ENCODE measurements at regions of chr2 and their contacts with region 1.

Region 1: GRCh38 chr2:232611551-232612218 is 21.7 kb upstream of the EFHD1 start:
- H3K4me3 ChIP-seq: no peak overlapping the region
- H3K27ac ChIP-seq: peak overlapping the region; percentile 19; the same call in 1 of the 2 replicates
- H3K4me1 ChIP-seq: no peaks in the 10 kb centered on the region
- CTCF ChIP-seq: peak; percentile 89

Region 2: GRCh38 chr2:232576995-232577394 is 34.7 kb before region 1 on chr2:
- CTCF ChIA-PET with region 1: no interaction called
- POLR2A ChIA-PET with region 1: no interaction called
- H3K4me3 ChIP-seq: no peak overlapping the region
- H3K27ac ChIP-seq: no peak overlapping the region
- H3K4me1 ChIP-seq: no peaks in the 10 kb centered on the region
- CTCF ChIP-seq: no peak

Region 3: GRCh38 chr2:232592772-232593395 is 18.8 kb before region 1 on chr2:
- CTCF ChIA-PET with region 1: no interaction called
- POLR2A ChIA-PET with region 1: no interaction called
- H3K4me3 ChIP-seq: no peak overlapping the region
- H3K27ac ChIP-seq: no peak overlapping the region
- H3K4me1 ChIP-seq: no peaks in the 10 kb centered on the region
- CTCF ChIP-seq: no peak

Region 4: DNA sequence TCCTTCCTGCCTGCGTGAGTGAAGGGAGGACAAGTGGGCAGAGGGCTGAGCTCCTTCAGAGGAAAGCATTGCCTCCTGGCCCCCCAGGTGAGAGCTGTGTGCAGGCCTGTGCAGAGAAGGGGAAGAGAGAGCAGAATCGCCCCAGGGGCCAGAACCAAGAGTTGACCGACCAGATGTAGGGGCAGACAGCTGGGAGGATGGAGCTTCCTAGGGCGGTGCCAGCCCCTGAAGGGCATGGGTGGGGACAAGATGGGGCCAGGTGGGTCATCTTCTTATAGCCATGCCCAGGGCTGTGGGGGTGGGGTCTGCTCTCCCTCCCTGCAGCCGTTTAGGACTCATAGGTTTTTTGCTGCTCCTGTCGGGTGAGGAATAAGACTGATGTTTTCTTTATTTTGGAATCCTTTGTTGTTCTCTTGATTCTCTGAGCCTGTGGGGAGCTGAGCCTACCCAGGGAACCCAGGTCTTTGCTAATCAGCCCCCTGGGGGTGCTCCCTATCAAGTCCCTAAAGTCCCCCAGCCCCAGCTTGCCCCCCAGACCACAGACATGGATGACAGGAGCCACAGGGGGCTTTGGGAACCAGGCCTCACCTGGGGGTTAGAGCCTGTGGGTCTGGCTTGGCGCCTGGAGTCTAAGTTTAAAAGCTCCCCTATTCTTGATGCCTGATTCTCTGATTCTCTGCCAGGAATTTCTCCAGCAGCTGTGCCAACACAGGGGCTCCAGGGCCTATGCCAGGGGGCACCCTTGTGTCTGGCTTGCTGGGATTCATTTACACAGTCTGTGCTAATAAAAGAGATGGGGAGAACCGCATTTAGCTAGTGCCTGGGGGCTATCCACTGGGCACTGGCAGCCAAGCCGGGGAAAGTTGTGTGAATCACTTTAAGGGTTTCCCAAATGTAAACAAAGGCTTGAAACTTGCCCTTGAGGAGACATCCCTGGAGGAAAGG is 12.4 kb after region 1 on chr2:
- CTCF ChIA-PET with region 1: interaction called, 26 read pairs
- POLR2A ChIA-PET with region 1: interaction called, 5 read pairs
- H3K4me3 ChIP-seq: no peak overlapping the region
- H3K27ac ChIP-seq: no peak overlapping the region
- H3K4me1 ChIP-seq: 0 out of 2 replicates have a peak, but pooled peaks cover 3% of the 10 kb centered on the region
- CTCF ChIP-seq: no peak